Sigmoid colon (tissue), 7 donors: ENCODE measurements at regions of chr6 and their contacts with region 1.

Region 1: DNA sequence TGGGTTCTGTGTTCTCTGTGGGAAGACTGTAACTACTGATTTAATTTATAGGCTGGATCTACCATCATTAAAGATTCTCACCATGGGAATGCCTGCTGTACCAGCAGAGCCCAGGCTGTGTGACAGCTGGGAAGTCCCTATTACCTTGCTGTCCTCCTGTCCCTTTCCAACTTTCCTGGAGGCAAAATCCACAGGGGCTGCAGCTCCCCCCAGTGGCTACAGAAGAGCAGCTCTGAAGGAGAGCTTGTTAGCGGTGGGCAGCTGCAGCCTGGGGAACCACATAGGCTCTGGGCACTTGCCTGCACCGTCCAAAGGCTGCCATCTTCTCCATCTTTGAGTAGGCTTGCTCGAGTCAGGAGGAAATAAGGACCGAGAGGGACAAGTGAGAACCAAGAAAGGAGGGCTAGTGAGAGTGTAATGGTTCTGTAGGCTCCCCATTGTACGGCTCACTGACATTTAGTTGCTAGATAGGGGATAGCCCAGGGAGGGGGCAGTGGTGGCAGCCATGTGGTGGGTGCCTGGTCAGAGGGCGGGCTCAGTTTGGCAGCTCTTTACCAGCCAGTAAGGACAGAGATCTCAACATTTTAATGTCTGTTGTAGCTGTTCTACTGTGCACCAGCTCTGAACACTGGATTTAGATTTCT is 155.1 kb upstream of the MLIP start:
- DNase-seq: peak; percentile 84
- H3K4me3 ChIP-seq: no peak overlapping the region
- H3K27ac ChIP-seq: no peak overlapping the region
- H3K4me1 ChIP-seq: no peaks in the 10 kb centered on the region
- H3K27me3 ChIP-seq: no peaks in the 10 kb centered on the region
- CTCF ChIP-seq: peak; percentile 56 to 77 (median 68)
- EP300 ChIP-seq: no peak
- POLR2A ChIP-seq: no peak

Region 2: GRCh38 chr6:53492860-53493634 is 463.1 kb before region 1 on chr6:
- intact Hi-C with region 1: loop called (anchors 10 kb)
- DNase-seq: no peak
- H3K4me3 ChIP-seq: peak overlapping the region in 3 of 4 donors; percentile 12 to 20 (median 12)
- H3K27ac ChIP-seq: peak overlapping the region in 2 of 4 donors; percentile 32 to 52
- H3K4me1 ChIP-seq: peaks cover 0 to 39% (median 25%) of the 10 kb centered on the region in 4 donors
- H3K27me3 ChIP-seq: no peaks in the 10 kb centered on the region
- CTCF ChIP-seq: peak; percentile 50 to 72 (median 65)
- EP300 ChIP-seq: no peak
- POLR2A ChIP-seq: no peak

Region 3: GRCh38 chr6:53725791-53726431 is 230.3 kb before region 1 on chr6:
- intact Hi-C with region 1: loop called (anchors 5 kb)
- DNase-seq: peak; percentile 86
- H3K4me3 ChIP-seq: no peak overlapping the region
- H3K27ac ChIP-seq: no peak overlapping the region
- H3K4me1 ChIP-seq: peaks cover 0 to 3% (median 0%) of the 10 kb centered on the region in 4 donors
- H3K27me3 ChIP-seq: no peaks in the 10 kb centered on the region
- CTCF ChIP-seq: peak; percentile 69 to 95 (median 84)
- EP300 ChIP-seq: no peak
- POLR2A ChIP-seq: no peak

Region 4: GRCh38 chr6:53794720-53795253 is 161.4 kb before region 1 on chr6 and contains the start of gene LRRC1:
- intact Hi-C with region 1: loop called (anchors 1 kb)
- DNase-seq: peak; percentile 95
- H3K4me3 ChIP-seq: peak within 1 kb of the TSS; percentile 69 to 95 (median 84)
- H3K27ac ChIP-seq: peak within 1 kb of the TSS; percentile 81 to 90 (median 84)
- H3K4me1 ChIP-seq: peaks cover 0 to 37% (median 21%) of the 10 kb centered on the region in 4 donors
- H3K27me3 ChIP-seq: peaks cover 0 to 5% (median 0%) of the 10 kb centered on the region in 3 donors
- CTCF ChIP-seq: no peak
- EP300 ChIP-seq: no peak
- POLR2A ChIP-seq: peak; percentile 24 to 36
- total RNA-seq, gene LRRC1: 20.8 to 32.4 (median 24.4) TPM

Region 5: DNA sequence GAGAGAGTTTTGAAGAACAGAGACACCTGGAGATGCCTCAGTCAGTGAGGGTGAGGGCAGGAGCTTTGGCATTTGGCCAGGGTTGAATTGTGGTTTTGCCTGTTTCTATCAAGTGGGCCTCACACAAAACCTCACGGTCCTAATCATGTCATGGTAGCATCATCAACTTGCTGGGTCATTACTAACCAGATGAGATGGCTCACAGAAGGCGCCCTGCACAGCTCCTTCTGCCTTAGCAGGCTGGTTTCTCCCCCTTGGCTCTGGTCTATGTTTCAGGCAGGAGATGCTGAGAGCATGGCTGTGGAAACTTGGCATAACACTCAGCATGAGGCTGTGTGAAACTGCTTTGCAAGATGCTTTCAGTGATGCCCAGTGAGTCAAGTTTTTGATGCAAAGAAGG is 62.1 kb before region 1 on chr6:
- intact Hi-C with region 1: loop called (anchors 10 kb)
- DNase-seq: peak; percentile 75
- H3K4me3 ChIP-seq: no peak overlapping the region
- H3K27ac ChIP-seq: peak overlapping the region in 2 of 4 donors; percentile 32 to 46
- H3K4me1 ChIP-seq: peaks cover 0 to 26% (median 19%) of the 10 kb centered on the region in 4 donors
- H3K27me3 ChIP-seq: no peaks in the 10 kb centered on the region
- CTCF ChIP-seq: no peak
- EP300 ChIP-seq: no peak
- POLR2A ChIP-seq: no peak